GM23248 (cell line): ENCODE measurements at regions of chr1 and their contacts with region 1.

Region 1: GRCh38 chr1:214584805-214585766 is 17.9 kb upstream of the CENPF start:
- DNase-seq: peak; percentile 85
- H3K4me3 ChIP-seq: no peak overlapping the region
- H3K27ac ChIP-seq: peak overlapping the region; percentile 27; the same call in 1 of the 2 replicates
- H3K4me1 ChIP-seq: peaks cover 44% of the 10 kb centered on the region
- H3K27me3 ChIP-seq: no peaks in the 10 kb centered on the region

Region 2: GRCh38 chr1:214224611-214225354 is 360.3 kb before region 1 on chr1:
- in situ Hi-C with region 1: loop called (anchors 25 kb)
- DNase-seq: peak; percentile 74
- H3K4me3 ChIP-seq: peak overlapping the region; percentile 78
- H3K27ac ChIP-seq: peak overlapping the region; percentile 64
- H3K4me1 ChIP-seq: 0 out of 2 replicates have a peak, but pooled peaks cover 6% of the 10 kb centered on the region
- H3K27me3 ChIP-seq: no peaks in the 10 kb centered on the region

Region 3: DNA sequence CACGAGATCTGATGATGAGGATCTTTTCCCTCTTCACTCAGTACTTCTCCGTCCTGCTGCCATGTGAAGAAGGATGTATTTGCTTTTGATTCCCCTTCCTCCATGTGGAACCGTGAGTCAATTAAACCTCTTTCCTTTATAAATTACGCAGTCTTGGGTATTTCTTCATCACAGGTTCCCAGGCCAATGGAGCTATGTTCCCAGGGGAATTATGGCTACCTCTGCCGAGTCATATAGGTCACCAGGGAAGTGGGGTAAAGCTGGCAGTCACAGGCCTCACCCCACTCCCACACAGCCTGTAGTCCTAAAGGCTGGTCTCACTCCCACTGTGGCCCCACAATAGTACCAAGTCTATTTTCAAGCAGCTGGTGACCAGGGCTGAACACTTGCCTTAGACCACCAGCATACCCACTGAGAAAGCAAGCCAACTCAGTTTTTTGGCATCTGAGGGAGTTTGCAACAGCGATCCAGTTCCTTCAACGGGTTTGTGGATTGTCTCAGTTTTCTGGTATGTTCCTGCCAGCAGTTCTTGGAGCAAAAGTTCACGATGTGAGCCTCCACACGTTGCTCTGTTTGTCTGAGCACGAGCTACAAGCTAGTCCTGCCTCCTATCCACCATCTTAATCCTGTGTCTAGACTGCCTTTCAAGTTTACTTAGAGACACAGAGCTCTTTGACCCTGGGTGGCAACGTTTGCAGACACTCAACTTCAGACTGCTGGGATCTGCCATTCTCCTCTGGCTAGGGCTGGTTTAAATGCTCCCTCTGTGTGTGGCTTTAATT is 122.4 kb after region 1 on chr1:
- in situ Hi-C with region 1: no loop called
- DNase-seq: peak; percentile 73
- H3K4me3 ChIP-seq: no peak overlapping the region
- H3K27ac ChIP-seq: peak overlapping the region; percentile 76
- H3K4me1 ChIP-seq: peaks cover 19% of the 10 kb centered on the region
- H3K27me3 ChIP-seq: no peaks in the 10 kb centered on the region